Left colon (tissue), 2 donors: ENCODE measurements at regions of chr2 and their contacts with region 1.

Region 1: DNA sequence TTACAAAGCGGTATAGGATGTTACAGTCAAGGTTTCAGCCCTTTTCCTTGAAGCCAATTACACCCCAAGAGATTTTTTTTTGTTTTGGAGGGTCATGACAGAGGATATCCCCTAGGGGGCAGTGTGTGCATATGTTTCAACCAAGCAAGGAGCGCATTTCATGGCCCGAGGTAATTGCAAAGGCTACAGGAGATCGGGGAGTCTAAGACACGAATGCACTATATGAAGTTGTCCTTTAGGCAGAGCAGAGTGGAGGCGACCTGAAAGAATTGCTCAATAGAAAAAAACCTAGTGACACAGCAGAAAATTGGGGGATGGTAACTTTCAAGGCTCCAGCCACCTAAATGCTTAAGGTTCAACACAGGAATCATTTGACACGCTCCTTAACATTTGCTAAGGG is 219.8 kb upstream of the PARD3B start:
- DNase-seq: peak; percentile 37 to 38
- ATAC-seq: peak; percentile 90

Region 2: GRCh38 chr2:204479557-204479956 is 154.1 kb after region 1 on chr2:
- intact Hi-C with region 1: no loop called
- DNase-seq: no peak
- ATAC-seq: no peak

Region 3: DNA sequence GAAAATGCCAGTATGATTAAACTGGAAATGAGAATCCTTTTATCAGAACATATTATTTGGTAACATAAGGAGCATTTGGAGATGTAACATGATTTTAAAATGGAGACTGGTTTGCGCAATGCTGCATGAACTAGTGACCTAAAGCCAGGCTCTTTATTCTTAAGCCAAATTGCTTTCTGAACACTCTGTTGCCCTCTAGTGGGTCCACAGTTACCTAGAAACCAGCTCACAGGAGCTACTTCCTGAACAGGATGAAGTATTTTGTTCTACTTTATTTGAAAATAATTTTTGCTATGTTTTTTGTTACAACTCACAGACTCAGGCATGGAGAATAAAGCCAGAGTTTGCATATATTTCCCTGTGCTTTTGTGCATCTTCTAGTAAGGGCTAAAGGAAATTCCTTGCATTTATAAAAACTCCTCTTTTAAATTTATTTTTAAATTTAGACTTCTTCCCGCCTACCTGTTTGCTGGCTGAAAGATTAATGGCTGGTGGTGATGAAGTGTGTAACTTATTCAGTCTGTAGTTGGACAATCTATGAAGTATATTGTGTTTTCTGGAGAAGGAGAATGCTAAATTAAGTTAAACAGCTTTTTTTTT is 366.5 kb after region 1 on chr2:
- intact Hi-C with region 1: loop called in 1 of 2 experiments (anchors 5 kb)
- DNase-seq: peak; percentile 25 to 37
- ATAC-seq: peak; percentile 93